K562 (cell line): ENCODE measurements at regions of chrX and their contacts with region 1.

Region 1: GRCh38 chrX:48539345-48540027 is at the start of gene TBC1D25:
- DNase-seq: peak; percentile 90 to 99 (median 92)
- ATAC-seq: peak; percentile 91
- H3K4me3 ChIP-seq: peak within 1 kb of the TSS; percentile 66
- H3K27ac ChIP-seq: peak within 1 kb of the TSS; percentile 94
- H3K4me1 ChIP-seq: peaks cover 9 to 19% of the 10 kb centered on the region in 2 experiments; a peak in 4 of 5 replicates
- H3K27me3 ChIP-seq: no peaks in the 10 kb centered on the region
- CTCF ChIP-seq: peak; percentile 53 to 62 (median 55)
- EP300 ChIP-seq: 0 out of 2 replicates have a peak, but pooled peaks have one; percentile 27
- POLR2A ChIP-seq: peak; percentile 71
- RAD21 ChIP-seq: peak; percentile 46 to 48; a peak in 3 of 4 replicates
- polyA plus RNA-seq, gene TBC1D25: 0.62 to 0.87 TPM

Region 2: GRCh38 chrX:48508400-48509244 is 30.9 kb before region 1 on chrX and contains the start of gene PORCN:
- CTCF ChIA-PET with region 1: no interaction called
- POLR2A ChIA-PET with region 1: no interaction called
- in situ Hi-C with region 1: no loop called
- intact Hi-C with region 1: no loop called
- DNase-seq: peak; percentile 88 to 95 (median 94)
- ATAC-seq: peak; percentile 98
- H3K4me3 ChIP-seq: peak within 1 kb of the TSS; percentile 54
- H3K27ac ChIP-seq: peak within 1 kb of the TSS; percentile 64
- H3K4me1 ChIP-seq: peaks cover 11 to 31% of the 10 kb centered on the region in 2 experiments; a peak in 4 of 5 replicates
- H3K27me3 ChIP-seq: no peaks in the 10 kb centered on the region
- CTCF ChIP-seq: no peak
- EP300 ChIP-seq: no peak
- POLR2A ChIP-seq: peak; percentile 73
- RAD21 ChIP-seq: no peak
- polyA plus RNA-seq, gene PORCN: 0.34 to 0.62 TPM

Region 3: GRCh38 chrX:48521353-48522243 is 17.9 kb before region 1 on chrX and contains the start of gene EBP:
- CTCF ChIA-PET with region 1: no interaction called
- POLR2A ChIA-PET with region 1: interaction called, 12 read pairs
- in situ Hi-C with region 1: no loop called
- intact Hi-C with region 1: no loop called
- DNase-seq: peak; percentile 93 to 98 (median 96)
- ATAC-seq: peak; percentile 98
- H3K4me3 ChIP-seq: peak within 1 kb of the TSS; percentile 60
- H3K27ac ChIP-seq: peak within 1 kb of the TSS; percentile 88
- H3K4me1 ChIP-seq: peaks cover 9 to 12% of the 10 kb centered on the region in 2 experiments; a peak in 3 of 5 replicates
- H3K27me3 ChIP-seq: no peaks in the 10 kb centered on the region
- CTCF ChIP-seq: no peak
- EP300 ChIP-seq: no peak
- POLR2A ChIP-seq: peak; percentile 77
- RAD21 ChIP-seq: no peak
- polyA plus RNA-seq, gene EBP: 569 to 987 TPM

Region 4: DNA sequence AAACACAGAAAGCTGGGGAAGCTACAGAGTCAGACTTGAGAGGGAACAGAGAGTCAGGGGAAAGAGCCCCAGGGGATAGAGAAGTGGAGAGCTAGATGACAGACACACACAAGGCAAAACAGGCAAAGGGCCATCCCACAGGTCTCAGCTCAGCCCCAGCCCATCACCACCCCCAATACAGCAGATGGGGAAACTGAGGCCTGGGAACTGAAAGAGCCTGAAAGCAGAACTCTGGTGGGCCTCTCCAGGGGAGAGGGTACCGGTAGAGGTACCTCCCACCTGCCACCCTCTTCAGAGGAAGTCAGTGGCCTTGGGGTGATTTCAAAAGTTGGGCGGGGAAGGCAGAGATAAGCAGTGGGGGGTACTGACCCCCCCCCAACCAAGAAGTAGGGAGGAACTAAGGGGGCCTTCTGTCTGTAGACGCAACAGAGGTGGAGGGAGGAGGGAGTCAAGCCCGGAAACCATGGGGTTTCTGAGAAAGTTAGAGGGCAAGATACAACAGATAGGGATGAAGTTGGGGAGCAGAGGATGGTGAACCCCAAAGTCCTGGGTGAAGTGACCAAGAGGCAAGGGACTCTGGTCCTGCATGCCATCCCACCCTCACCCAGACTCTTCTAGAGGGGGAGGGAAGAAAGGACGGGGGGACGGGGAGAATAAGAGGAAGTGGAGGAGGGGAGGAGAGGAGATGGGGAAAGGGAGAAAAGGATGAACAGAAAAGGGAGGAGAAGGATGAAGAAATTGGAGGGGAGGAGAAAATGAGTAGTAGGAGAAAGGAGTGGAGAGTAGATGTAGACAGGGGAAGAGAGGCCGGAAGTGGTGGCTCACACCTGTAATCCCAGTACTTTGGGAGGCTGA is 250.1 kb after region 1 on chrX:
- CTCF ChIA-PET with region 1: no interaction called
- POLR2A ChIA-PET with region 1: no interaction called
- in situ Hi-C with region 1: no loop called
- intact Hi-C with region 1: no loop called
- DNase-seq: peak in 2 of 4 experiments; percentile 50 to 75
- ATAC-seq: no peak
- H3K4me3 ChIP-seq: peak overlapping the region; percentile 75
- H3K27ac ChIP-seq: peak overlapping the region; percentile 85
- H3K4me1 ChIP-seq: peaks cover 51 to 65% of the 10 kb centered on the region in 2 experiments
- H3K27me3 ChIP-seq: no peaks in the 10 kb centered on the region
- CTCF ChIP-seq: no peak
- EP300 ChIP-seq: peak; percentile 38; the same call in 1 of the 2 replicates
- POLR2A ChIP-seq: no peak
- RAD21 ChIP-seq: no peak